Common myeloid progenitor, CD34-positive (primary cell): ENCODE measurements at regions of chr7 and their contacts with region 1.

Region 1: DNA sequence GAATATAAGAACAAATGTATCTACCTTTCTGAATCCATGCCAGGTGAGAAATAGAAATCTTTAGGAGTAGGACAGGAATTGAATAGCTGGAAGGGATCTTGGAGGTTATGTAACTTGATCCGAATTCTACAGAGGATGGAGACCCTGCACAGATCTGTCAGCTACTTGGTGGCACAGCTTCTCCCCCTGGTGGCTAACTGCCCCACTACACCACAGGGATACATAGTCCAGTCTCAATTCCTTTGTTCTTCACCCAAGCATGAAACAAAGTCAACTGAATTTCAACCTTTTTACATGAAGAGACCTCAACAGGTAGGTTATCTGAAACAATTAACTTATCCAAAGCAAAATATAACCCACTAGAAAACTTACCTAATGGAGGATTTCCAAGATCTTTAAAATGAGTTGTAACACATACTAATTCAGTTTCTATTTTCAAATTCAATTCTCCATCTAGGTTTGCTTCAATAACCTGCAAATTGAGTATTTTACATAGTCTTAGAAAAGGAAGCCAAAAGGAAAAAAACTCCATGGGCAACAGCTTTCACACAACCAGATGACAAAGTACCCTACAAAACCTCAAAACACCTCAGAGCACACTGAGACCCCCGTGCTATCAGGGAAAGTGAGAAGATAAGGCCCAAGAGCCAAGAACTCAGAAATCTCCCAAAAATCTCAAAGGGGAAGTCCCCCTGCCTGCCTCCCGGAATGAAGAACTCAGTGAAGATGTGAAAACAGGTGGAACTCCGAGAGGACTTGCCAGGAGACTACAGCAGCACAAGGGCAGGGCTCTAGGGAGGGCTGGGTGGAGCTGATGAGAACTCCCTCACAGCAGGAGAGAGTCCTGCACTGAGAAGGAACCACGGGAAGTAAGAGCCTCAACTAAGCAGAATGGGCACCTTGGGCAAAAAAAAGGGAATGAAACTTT is 10.3 kb downstream of the HUS1 start:
- DNase-seq: peak; percentile 65 to 75 (median 68)
- H3K4me3 ChIP-seq: no peak overlapping the region
- H3K27ac ChIP-seq: no peak overlapping the region
- H3K4me1 ChIP-seq: peaks cover 8 to 24% (median 21%) of the 10 kb centered on the region in 4 experiments
- H3K27me3 ChIP-seq: no peaks in the 10 kb centered on the region

Region 2: DNA sequence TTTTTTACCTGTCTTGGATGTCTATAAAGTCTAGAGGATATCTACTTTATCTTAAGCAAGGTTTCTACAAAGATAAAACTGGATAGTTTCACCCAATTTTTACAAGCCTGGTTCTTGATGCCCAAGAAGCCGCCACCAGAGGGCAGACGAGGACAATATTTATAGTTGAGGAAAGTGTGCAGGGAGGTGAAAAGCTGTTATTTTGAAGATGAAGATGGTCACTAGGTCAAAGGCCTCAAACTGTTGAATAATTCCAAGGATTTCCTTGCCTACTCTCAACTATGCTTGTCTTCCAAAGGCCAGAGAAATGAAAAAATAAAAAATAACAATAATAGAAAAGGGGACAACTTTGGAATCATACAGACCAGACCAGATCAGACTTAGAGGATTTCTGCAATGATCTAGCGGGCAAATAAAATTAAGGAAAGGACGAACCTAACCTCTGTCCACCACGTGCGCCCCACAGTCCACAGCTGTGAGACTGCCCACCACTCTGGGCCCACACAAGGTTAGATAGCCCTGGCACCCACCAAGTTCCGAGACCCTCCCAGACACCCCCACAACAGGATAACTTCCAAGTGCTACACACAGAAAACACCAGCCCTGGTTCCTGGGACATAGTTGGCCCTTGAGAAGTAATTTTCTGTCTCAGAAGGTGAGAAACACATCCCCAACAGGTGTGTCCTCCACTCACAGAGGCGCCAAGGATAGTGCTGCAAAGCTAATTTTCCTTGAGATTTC is 23.7 kb before region 1 on chr7:
- CTCF ChIA-PET with region 1: interaction called, 16 read pairs
- POLR2A ChIA-PET with region 1: no interaction called
- DNase-seq: peak; percentile 51 to 78 (median 67)
- H3K4me3 ChIP-seq: no peak overlapping the region
- H3K27ac ChIP-seq: no peak overlapping the region
- H3K4me1 ChIP-seq: no peaks in the 10 kb centered on the region
- H3K27me3 ChIP-seq: no peaks in the 10 kb centered on the region

Region 3: GRCh38 chr7:47979145-47979831 is 10.2 kb after region 1 on chr7 and contains the start of gene HUS1:
- CTCF ChIA-PET with region 1: interaction called, 12 read pairs
- POLR2A ChIA-PET with region 1: no interaction called
- DNase-seq: peak; percentile 92 to 94 (median 94)
- H3K4me3 ChIP-seq: peak within 1 kb of the TSS; percentile 21 to 91 (median 82)
- H3K27ac ChIP-seq: peak within 1 kb of the TSS; percentile 54 to 76
- H3K4me1 ChIP-seq: peaks cover 4 to 16% (median 12%) of the 10 kb centered on the region in 4 experiments
- H3K27me3 ChIP-seq: no peaks in the 10 kb centered on the region